ENCODE measurements at regions of chr15 and their contacts with region 1.

Region 1: DNA sequence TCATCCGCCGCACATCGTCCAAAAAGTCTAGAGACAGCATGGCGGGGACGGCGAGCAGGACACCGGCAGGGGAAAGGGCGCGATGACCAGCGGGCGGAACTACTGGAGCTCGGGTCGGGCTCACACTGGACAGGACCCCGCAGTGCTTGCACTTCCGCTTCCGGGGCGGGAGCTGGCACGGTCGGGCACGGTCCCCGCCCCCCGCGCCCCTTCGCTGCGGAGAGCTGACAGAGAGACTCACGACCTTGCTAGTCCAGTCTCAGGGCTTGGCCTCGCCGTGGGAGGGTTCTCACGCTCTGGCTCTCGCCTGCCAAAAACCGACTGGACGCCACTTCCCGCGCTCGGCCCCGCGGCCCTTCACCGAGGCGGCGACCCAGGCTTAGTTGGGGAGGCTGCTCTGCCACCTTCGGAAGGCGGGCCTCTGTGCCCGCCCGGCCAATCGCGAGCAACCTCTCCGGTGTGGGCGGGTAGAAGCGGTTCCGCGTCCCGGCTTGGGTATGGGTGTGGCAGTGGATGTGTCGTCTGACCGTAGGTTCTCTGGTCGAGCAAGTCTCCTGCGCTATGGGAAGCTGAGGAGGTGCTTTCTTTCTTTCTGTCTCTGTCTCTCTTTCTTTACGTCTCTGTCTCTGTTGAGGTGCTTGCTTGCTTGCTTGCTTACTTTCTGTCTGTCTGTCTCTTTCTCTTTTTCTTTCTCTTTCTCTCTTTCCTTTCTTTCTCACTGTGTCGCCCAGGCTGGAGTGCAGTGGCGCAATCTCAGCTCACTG is at the start of gene SEC11A:
- DNase-seq: peak; percentile 96
- H3K4me3 Mint-ChIP-seq: peak within 1 kb of the TSS; percentile 83
- H3K27ac Mint-ChIP-seq: peak within 1 kb of the TSS; percentile 85
- H3K4me1 Mint-ChIP-seq: peaks cover 6% of the 10 kb centered on the region
- H3K27me3 Mint-ChIP-seq: no peaks in the 10 kb centered on the region
- CTCF ChIP-seq: no peak
- total RNA-seq, gene SEC11A: 192 and 197 TPM in 2 replicates

Region 2: DNA sequence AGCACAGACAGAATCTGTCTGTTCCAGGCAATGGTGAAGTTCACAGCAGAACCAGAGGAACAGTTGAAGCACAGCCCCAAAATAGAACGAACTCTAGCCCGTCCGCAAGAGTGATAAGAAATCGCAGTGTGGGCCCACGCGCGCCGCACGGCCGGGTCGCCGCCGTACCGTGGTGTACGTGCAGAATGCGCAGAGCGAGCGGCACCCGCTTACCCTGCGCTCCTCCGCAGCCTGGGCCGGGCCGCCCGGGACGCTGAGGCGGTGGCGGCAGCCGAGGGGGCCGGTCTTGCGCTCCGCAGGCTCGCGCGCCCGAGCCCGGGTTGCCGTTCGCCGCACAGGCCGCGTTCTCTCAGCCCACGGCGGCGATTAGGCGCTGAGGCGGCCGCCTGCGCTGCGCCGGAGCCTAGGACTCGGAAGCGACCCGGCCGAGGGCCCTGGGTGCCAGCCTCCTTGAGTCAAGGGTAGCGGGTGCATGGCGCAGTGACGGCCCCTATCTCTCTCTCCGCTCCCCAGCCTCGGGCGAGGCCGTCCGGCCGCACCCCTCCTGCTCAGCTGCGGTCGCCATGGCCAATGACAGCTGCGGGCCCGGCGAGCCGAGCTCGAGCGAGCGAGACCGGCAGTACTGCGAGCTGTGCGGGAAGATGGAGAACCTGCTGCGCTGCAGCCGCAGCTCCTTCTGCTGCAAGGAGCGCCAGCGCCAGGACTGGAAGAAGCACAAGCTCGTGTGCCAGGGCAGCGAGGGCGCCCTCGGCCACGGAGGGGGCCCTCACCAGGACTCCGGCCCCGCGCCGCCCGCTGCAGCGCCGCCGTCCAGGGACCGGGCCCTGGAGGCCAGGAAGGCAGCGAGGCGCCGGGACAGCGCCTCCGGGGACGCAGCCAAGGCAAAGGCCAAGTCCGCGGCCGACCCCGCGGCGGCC is 82.6 kb before region 1 on chr15:
- CTCF ChIA-PET with region 1: no interaction called
- POLR2A ChIA-PET with region 1: interaction called, 21 read pairs
- intact Hi-C with region 1: no loop called
- DNase-seq: peak; percentile 76
- H3K4me3 Mint-ChIP-seq: peak overlapping the region; percentile 91
- H3K27ac Mint-ChIP-seq: peak overlapping the region; percentile 71
- H3K4me1 Mint-ChIP-seq: peaks cover 23% of the 10 kb centered on the region
- H3K27me3 Mint-ChIP-seq: no peaks in the 10 kb centered on the region
- CTCF ChIP-seq: no peak

Region 3: GRCh38 chr15:84697236-84697990 is 18.8 kb before region 1 on chr15:
- CTCF ChIA-PET with region 1: interaction called, 3 read pairs
- POLR2A ChIA-PET with region 1: interaction called, 48 read pairs
- intact Hi-C with region 1: no loop called
- DNase-seq: no peak
- H3K4me3 Mint-ChIP-seq: no peak overlapping the region
- H3K27ac Mint-ChIP-seq: no peak overlapping the region
- H3K4me1 Mint-ChIP-seq: peaks cover 6% of the 10 kb centered on the region
- H3K27me3 Mint-ChIP-seq: no peaks in the 10 kb centered on the region
- CTCF ChIP-seq: no peak

Region 4: DNA sequence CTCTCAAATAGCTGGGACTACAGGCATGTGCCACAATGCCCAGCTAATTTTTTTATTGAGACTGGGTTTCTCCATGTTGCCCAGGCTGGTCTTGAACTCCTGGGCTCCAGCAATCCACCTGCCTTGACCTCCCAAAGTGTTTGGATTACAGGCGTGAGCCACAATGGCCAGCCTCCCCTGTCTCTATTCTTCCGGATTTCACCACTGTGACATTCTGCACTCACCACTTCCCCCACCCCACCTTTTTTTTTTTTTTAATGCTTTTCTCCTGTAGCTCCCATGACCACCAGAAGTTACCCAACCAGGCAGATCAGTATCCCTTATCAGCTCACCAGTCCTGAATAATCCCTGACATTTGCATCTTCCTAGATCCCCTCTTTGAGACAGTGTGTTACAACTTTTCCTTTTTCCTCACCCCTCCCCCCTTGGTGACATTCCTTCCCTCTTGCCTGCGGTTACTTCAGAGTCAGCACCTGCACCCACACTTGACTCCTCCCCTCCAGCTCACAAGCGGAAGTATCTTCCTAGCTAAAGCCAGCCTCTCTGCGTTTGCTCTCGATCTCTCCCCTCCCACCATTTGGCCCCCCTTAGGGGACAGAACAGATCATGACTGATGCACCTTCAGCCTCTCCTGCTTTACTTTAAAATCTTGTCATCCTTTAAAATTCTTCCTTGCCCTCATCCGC is 18.7 kb after region 1 on chr15:
- CTCF ChIA-PET with region 1: interaction called, 5 read pairs
- POLR2A ChIA-PET with region 1: interaction called, 105 read pairs
- intact Hi-C with region 1: no loop called
- DNase-seq: peak; percentile 65
- H3K4me3 Mint-ChIP-seq: peak overlapping the region; percentile 70
- H3K27ac Mint-ChIP-seq: peak overlapping the region; percentile 55
- H3K4me1 Mint-ChIP-seq: peaks cover 20% of the 10 kb centered on the region
- H3K27me3 Mint-ChIP-seq: no peaks in the 10 kb centered on the region
- CTCF ChIP-seq: no peak

Region 5: GRCh38 chr15:84748274-84749110 is 32.3 kb after region 1 on chr15 and contains the start of gene ZNF592:
- CTCF ChIA-PET with region 1: interaction called, 10 read pairs
- POLR2A ChIA-PET with region 1: interaction called, 64 read pairs
- intact Hi-C with region 1: loop called (anchors 1 kb)
- DNase-seq: peak; percentile 66
- H3K4me3 Mint-ChIP-seq: peak within 1 kb of the TSS; percentile 90
- H3K27ac Mint-ChIP-seq: peak within 1 kb of the TSS; percentile 93
- H3K4me1 Mint-ChIP-seq: peaks cover 41% of the 10 kb centered on the region
- H3K27me3 Mint-ChIP-seq: no peaks in the 10 kb centered on the region
- CTCF ChIP-seq: peak; percentile 19
- total RNA-seq, gene ZNF592: 27.0 and 27.5 TPM in 2 replicates

Region 6: DNA sequence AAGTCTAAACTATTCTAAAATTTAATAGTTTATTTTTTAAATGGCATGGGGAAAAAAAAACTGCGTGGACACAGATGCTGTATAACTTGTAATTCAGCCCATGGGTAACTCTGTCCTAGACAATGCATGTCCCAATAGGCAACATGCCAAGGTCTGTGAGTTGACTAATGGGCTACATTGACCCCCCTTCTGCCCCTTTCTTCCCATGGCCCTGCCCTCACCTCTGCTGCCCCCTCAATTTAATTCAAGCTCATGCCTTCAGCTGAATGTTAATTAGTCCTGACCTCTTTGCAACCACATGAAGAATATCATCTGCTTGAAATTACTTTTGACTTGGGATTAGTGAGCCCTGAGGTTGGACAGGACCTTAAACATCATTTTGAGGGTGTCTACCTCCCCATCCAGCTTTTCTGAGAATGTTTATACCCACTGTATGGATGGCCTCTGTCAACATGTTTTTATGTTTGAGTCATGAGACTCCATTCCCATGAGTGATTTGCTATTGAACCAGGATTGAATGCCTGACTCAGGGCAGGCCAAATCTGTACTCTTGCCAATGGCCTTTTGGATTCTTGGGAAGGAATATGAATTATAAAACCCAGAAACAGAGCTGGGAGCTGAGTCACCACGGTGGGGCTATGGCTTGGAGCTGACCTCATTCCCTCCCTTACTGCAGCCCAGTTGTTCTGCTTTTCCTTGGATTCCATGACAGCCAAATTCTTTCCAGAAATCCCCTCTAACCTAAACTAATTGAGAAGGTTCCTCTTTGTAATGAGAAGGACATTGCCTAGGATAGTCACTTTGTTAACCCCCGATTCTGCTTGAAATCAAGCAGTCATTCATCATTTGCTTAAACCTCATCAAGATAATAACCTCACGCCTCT is 232.0 kb after region 1 on chr15:
- CTCF ChIA-PET with region 1: no interaction called
- POLR2A ChIA-PET with region 1: no interaction called
- intact Hi-C with region 1: no loop called
- DNase-seq: peak; percentile 63
- H3K4me3 Mint-ChIP-seq: no peak overlapping the region
- H3K27ac Mint-ChIP-seq: no peak overlapping the region
- H3K4me1 Mint-ChIP-seq: peaks cover 5% of the 10 kb centered on the region
- H3K27me3 Mint-ChIP-seq: no peaks in the 10 kb centered on the region
- CTCF ChIP-seq: no peak

Measured in MCF 10A (cell line).